Caco-2 (cell line): ENCODE measurements at regions of chr12 and their contacts with region 1.

Region 1: DNA sequence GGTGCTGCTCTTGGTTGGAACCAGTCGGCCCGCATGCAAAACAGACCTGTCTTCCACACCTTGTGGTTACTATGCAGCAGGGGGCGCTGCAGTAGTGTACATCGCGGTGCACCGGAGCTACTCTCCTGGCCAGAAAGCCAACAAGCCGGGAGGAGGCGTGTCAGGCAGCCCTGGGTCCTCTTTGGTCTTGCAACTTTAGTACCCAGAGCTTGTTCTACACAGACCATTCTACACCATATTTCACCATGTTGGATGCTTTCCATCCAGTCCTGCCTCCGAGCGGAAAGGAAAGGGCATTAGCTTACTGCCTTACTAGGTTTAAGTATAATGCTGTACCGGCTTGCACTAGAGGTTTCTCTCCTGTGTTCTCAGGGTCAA is 927 bp upstream of the TMTC2 start:
- DNase-seq: peak; percentile 92 to 93
- H3K4me3 ChIP-seq: peak overlapping the region; percentile 71
- H3K4me3 Mint-ChIP-seq: peak overlapping the region; percentile 84
- H3K27ac Mint-ChIP-seq: peak overlapping the region; percentile 37
- H3K4me1 ChIP-seq: no peaks in the 10 kb centered on the region
- H3K4me1 Mint-ChIP-seq: peaks cover 12% of the 10 kb centered on the region
- H3K27me3 ChIP-seq: no peaks in the 10 kb centered on the region
- H3K27me3 Mint-ChIP-seq: peaks cover 8% of the 10 kb centered on the region
- CTCF ChIP-seq: peak; percentile 78 to 80

Region 2: GRCh38 chr12:82383930-82384552 is 301.7 kb before region 1 on chr12:
- CTCF ChIA-PET with region 1: no interaction called
- POLR2A ChIA-PET with region 1: no interaction called
- intact Hi-C with region 1: loop called (anchors 5 kb)
- DNase-seq: peak in 1 of 2 experiments; percentile 22
- H3K4me3 ChIP-seq: no peak overlapping the region
- H3K4me3 Mint-ChIP-seq: no peak overlapping the region
- H3K27ac Mint-ChIP-seq: no peak overlapping the region
- H3K4me1 ChIP-seq: no peaks in the 10 kb centered on the region
- H3K4me1 Mint-ChIP-seq: no peaks in the 10 kb centered on the region
- H3K27me3 ChIP-seq: no peaks in the 10 kb centered on the region
- H3K27me3 Mint-ChIP-seq: no peaks in the 10 kb centered on the region
- CTCF ChIP-seq: peak; percentile 47 to 50

Region 3: DNA sequence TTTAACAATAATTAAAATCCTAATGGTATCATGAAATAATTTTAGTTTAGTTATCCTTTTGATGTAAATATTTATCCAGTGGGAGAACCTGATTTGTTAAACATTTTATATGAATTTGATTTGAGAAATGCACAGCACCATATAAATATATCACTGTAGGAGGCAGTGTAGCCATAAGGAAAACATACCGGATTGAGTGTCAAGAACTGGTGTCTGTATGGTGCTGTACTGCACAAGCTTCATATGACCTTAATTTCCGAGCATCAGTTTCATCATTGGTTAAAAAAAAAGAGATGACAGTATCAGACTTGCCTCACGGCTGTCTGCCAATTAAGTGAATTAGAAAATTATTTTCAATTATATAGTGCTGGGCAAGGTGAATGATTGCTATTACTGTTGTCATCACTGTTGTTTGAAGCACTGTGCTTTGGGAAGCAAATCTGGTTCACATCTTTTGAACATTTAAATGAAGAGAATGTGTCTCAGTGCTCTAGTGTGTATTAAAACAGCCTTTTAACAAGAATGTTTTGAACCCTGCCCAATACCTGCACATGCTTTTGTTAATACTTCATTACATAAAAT is 73.1 kb after region 1 on chr12:
- CTCF ChIA-PET with region 1: interaction called, 4 read pairs
- POLR2A ChIA-PET with region 1: no interaction called
- intact Hi-C with region 1: loop called (anchors 5 kb)
- DNase-seq: no peak
- H3K4me3 ChIP-seq: no peak overlapping the region
- H3K4me3 Mint-ChIP-seq: no peak overlapping the region
- H3K27ac Mint-ChIP-seq: no peak overlapping the region
- H3K4me1 ChIP-seq: no peaks in the 10 kb centered on the region
- H3K4me1 Mint-ChIP-seq: no peaks in the 10 kb centered on the region
- H3K27me3 ChIP-seq: no peaks in the 10 kb centered on the region
- H3K27me3 Mint-ChIP-seq: no peaks in the 10 kb centered on the region
- CTCF ChIP-seq: no peak

Region 4: DNA sequence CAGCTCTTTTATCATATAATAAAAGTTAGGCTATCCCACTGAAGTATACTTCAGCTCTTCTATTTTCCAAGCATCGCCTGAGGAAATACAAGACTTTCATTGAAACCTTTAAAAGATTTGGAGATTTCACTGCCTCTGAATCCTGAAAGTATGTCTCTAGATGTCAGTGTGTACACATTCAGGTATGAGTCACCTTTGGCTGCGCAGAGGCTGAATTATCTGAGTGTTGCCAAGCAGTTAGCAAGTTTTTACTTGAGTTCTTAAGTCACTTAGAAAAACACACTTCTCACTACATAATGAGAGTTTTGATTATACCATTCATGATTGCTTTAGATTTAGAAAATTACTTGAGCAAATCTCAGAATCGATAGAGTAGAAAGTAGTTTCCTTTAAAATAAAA is 211.2 kb after region 1 on chr12:
- CTCF ChIA-PET with region 1: no interaction called
- POLR2A ChIA-PET with region 1: no interaction called
- intact Hi-C with region 1: loop called (anchors 10 kb)
- DNase-seq: peak in 1 of 2 experiments; percentile 12
- H3K4me3 ChIP-seq: no peak overlapping the region
- H3K4me3 Mint-ChIP-seq: no peak overlapping the region
- H3K27ac Mint-ChIP-seq: no peak overlapping the region
- H3K4me1 ChIP-seq: peaks cover 14% of the 10 kb centered on the region; the same call in 1 of the 2 replicates
- H3K4me1 Mint-ChIP-seq: no peaks in the 10 kb centered on the region
- H3K27me3 ChIP-seq: no peaks in the 10 kb centered on the region
- H3K27me3 Mint-ChIP-seq: peaks cover 2% of the 10 kb centered on the region
- CTCF ChIP-seq: no peak

Region 5: GRCh38 chr12:83261998-83262397 is 576.2 kb after region 1 on chr12:
- CTCF ChIA-PET with region 1: interaction called, 6 read pairs
- POLR2A ChIA-PET with region 1: no interaction called
- intact Hi-C with region 1: loop called (anchors 5 kb)
- DNase-seq: no peak
- H3K4me3 ChIP-seq: no peak overlapping the region
- H3K4me3 Mint-ChIP-seq: no peak overlapping the region
- H3K27ac Mint-ChIP-seq: no peak overlapping the region
- H3K4me1 ChIP-seq: no peaks in the 10 kb centered on the region
- H3K4me1 Mint-ChIP-seq: no peaks in the 10 kb centered on the region
- H3K27me3 ChIP-seq: no peaks in the 10 kb centered on the region
- H3K27me3 Mint-ChIP-seq: no peaks in the 10 kb centered on the region
- CTCF ChIP-seq: peak in 1 of 2 experiments; percentile 26

Region 6: DNA sequence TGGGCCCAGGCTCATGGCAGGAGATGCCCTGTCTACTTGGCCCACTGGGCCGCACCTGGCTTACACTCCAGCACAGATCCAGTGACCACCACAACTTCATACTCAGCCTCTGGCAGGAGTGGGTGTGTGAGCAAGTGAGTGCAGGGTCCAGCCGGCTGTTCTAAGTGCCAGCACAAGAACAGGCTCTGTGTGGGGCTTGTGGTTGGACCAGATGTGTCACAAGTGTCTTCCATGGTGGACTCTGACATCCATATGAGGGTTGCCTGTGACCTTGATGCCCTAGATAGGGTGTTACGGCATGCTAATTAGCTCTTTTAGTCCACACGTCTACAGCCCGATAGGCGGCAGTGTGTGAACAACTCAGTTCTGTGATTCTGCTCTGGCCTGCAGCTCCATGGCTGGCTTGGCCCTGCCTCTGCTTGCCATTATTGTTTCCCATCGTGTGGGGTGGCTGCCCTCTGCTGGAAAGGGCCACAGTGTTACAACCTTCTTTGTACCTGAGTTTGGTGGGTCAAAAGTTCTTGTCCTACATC is 1137.7 kb after region 1 on chr12:
- CTCF ChIA-PET with region 1: interaction called, 12 read pairs
- POLR2A ChIA-PET with region 1: no interaction called
- intact Hi-C with region 1: loop called (anchors 1 kb)
- DNase-seq: peak; percentile 68 to 76
- H3K4me3 ChIP-seq: no peak overlapping the region
- H3K4me3 Mint-ChIP-seq: no peak overlapping the region
- H3K27ac Mint-ChIP-seq: no peak overlapping the region
- H3K4me1 ChIP-seq: no peaks in the 10 kb centered on the region
- H3K4me1 Mint-ChIP-seq: no peaks in the 10 kb centered on the region
- H3K27me3 ChIP-seq: no peaks in the 10 kb centered on the region
- H3K27me3 Mint-ChIP-seq: no peaks in the 10 kb centered on the region
- CTCF ChIP-seq: peak; percentile 44 to 50